CD4-positive, alpha-beta T cell (primary cell): ENCODE measurements at regions of chr17 and their contacts with region 1.

Region 1: GRCh38 chr17:3845621-3846441 is at the start of gene NCBP3:
- DNase-seq: peak; percentile 79 to 97 (median 90)
- ATAC-seq: peak; percentile 90
- H3K4me3 ChIP-seq: peak within 1 kb of the TSS; percentile 100
- H3K4me3 Mint-ChIP-seq: peak within 1 kb of the TSS; percentile 95
- H3K27ac ChIP-seq: peak within 1 kb of the TSS; percentile 70 to 77
- H3K27ac Mint-ChIP-seq: peak within 1 kb of the TSS; percentile 82
- H3K4me1 ChIP-seq: peaks cover 30% of the 10 kb centered on the region
- H3K4me1 Mint-ChIP-seq: peaks cover 28% of the 10 kb centered on the region
- H3K27me3 ChIP-seq: no peaks in the 10 kb centered on the region
- H3K27me3 Mint-ChIP-seq: no peaks in the 10 kb centered on the region
- CTCF ChIP-seq: peak; percentile 82
- total RNA-seq, gene NCBP3: 25.0 to 29.5 TPM

Region 2: GRCh38 chr17:3668279-3669085 is 177.3 kb before region 1 on chr17 and contains the starts of genes EMC6 and TAX1BP3:
- CTCF ChIA-PET with region 1: no interaction called
- POLR2A ChIA-PET with region 1: interaction called, 4 read pairs
- intact Hi-C with region 1: loop called in 1 of 2 experiments (anchors 5 kb)
- DNase-seq: peak; percentile 96 to 99 (median 99)
- ATAC-seq: peak; percentile 94
- H3K4me3 ChIP-seq: peak within 1 kb of the TSS; percentile 100
- H3K4me3 Mint-ChIP-seq: peak within 1 kb of the TSS; percentile 92
- H3K27ac ChIP-seq: peak within 1 kb of the TSS; percentile 67 to 78
- H3K27ac Mint-ChIP-seq: peak within 1 kb of the TSS; percentile 81
- H3K4me1 ChIP-seq: peaks cover 25% of the 10 kb centered on the region
- H3K4me1 Mint-ChIP-seq: peaks cover 13% of the 10 kb centered on the region
- H3K27me3 ChIP-seq: no peaks in the 10 kb centered on the region
- H3K27me3 Mint-ChIP-seq: no peaks in the 10 kb centered on the region
- CTCF ChIP-seq: no peak
- total RNA-seq, gene EMC6: 28.8 to 29.6 TPM
- total RNA-seq, gene TAX1BP3: 6.0 to 6.6 TPM

Region 3: DNA sequence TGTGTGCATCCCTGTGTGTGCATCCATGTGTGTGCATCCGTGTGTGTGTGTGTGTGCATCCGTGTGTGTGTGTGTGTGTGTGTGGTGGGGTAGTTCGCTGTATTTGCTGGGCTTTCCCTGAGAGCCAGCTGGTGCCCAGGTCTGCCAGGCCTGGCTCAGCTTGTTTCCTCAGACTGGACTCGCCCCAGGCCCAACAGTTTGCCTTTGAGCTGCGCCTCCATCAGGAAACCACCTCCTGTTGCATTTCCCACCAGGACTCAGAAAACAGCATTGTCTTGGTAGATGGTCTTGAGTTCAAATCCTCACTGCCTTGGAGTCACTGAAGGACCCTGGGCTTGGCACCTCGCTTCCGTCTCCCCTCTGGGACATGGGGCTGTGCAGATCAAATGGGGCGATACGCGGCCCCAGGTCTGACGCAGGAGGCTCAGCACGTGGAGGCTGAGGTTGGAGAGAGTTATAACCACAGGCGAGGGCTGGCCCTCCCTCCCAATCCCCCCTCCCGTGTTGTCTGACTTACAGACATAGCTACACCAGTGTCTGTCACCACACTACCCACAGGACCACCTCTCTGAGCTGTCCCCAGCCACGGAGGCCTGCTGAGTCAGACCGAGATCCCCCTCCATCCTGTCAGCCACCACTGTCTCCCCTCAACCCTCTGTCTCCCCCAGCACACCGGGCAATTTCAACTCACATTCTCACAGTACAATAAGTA is 49.6 kb before region 1 on chr17:
- CTCF ChIA-PET with region 1: no interaction called
- POLR2A ChIA-PET with region 1: no interaction called
- intact Hi-C with region 1: no loop called
- DNase-seq: peak; percentile 31 to 91 (median 58)
- ATAC-seq: peak; percentile 75
- H3K4me3 ChIP-seq: no peak overlapping the region
- H3K4me3 Mint-ChIP-seq: peak overlapping the region; percentile 11
- H3K27ac ChIP-seq: no peak overlapping the region
- H3K27ac Mint-ChIP-seq: peak overlapping the region; percentile 59
- H3K4me1 ChIP-seq: peaks cover 36% of the 10 kb centered on the region
- H3K4me1 Mint-ChIP-seq: peaks cover 20% of the 10 kb centered on the region
- H3K27me3 ChIP-seq: no peaks in the 10 kb centered on the region
- H3K27me3 Mint-ChIP-seq: no peaks in the 10 kb centered on the region
- CTCF ChIP-seq: no peak

Region 4: GRCh38 chr17:3827124-3827773 is 18.6 kb before region 1 on chr17:
- CTCF ChIA-PET with region 1: interaction called, 22 read pairs
- POLR2A ChIA-PET with region 1: interaction called, 3 read pairs
- intact Hi-C with region 1: no loop called
- DNase-seq: peak; percentile 44 to 85 (median 66)
- ATAC-seq: peak; percentile 67
- H3K4me3 ChIP-seq: no peak overlapping the region
- H3K4me3 Mint-ChIP-seq: no peak overlapping the region
- H3K27ac ChIP-seq: no peak overlapping the region
- H3K27ac Mint-ChIP-seq: no peak overlapping the region
- H3K4me1 ChIP-seq: no peaks in the 10 kb centered on the region
- H3K4me1 Mint-ChIP-seq: peaks cover 6% of the 10 kb centered on the region
- H3K27me3 ChIP-seq: no peaks in the 10 kb centered on the region
- H3K27me3 Mint-ChIP-seq: no peaks in the 10 kb centered on the region
- CTCF ChIP-seq: peak; percentile 84

Region 5: DNA sequence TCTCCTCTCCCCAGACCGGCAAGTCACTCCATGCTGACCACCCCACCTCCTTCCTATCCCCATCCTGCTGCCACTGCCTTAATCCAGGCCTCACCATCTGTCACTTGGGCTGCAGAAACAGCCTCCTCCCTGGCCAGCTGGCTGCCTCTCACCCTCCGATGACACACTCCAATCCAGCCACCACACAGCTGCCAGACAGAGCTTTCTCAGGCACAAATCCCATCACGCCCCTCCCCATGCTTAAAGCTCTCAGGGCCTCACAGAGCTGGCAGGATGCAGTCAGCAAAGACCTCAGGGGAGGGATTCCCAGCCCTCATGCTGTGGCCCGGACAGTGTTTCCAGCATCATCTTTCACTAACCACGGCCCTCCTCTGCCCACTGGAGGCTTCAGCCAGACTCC is 33.4 kb after region 1 on chr17:
- CTCF ChIA-PET with region 1: no interaction called
- POLR2A ChIA-PET with region 1: no interaction called
- intact Hi-C with region 1: no loop called
- DNase-seq: no peak
- ATAC-seq: no peak
- H3K4me3 ChIP-seq: no peak overlapping the region
- H3K4me3 Mint-ChIP-seq: no peak overlapping the region
- H3K27ac ChIP-seq: no peak overlapping the region
- H3K27ac Mint-ChIP-seq: no peak overlapping the region
- H3K4me1 ChIP-seq: no peaks in the 10 kb centered on the region
- H3K4me1 Mint-ChIP-seq: no peaks in the 10 kb centered on the region
- H3K27me3 ChIP-seq: no peaks in the 10 kb centered on the region
- H3K27me3 Mint-ChIP-seq: no peaks in the 10 kb centered on the region
- CTCF ChIP-seq: no peak

Region 6: GRCh38 chr17:3965118-3965803 is 119.4 kb after region 1 on chr17:
- CTCF ChIA-PET with region 1: interaction called, 9 read pairs
- POLR2A ChIA-PET with region 1: interaction called, 14 read pairs
- intact Hi-C with region 1: loop called in 1 of 2 experiments (anchors 5 kb)
- DNase-seq: peak; percentile 44 to 81 (median 58)
- ATAC-seq: peak; percentile 58
- H3K4me3 ChIP-seq: peak overlapping the region; percentile 65
- H3K4me3 Mint-ChIP-seq: peak overlapping the region; percentile 92
- H3K27ac ChIP-seq: peak overlapping the region; percentile 57 to 84
- H3K27ac Mint-ChIP-seq: peak overlapping the region; percentile 92
- H3K4me1 ChIP-seq: peaks cover 52% of the 10 kb centered on the region
- H3K4me1 Mint-ChIP-seq: peaks cover 51% of the 10 kb centered on the region
- H3K27me3 ChIP-seq: no peaks in the 10 kb centered on the region
- H3K27me3 Mint-ChIP-seq: no peaks in the 10 kb centered on the region
- CTCF ChIP-seq: no peak

Region 7: DNA sequence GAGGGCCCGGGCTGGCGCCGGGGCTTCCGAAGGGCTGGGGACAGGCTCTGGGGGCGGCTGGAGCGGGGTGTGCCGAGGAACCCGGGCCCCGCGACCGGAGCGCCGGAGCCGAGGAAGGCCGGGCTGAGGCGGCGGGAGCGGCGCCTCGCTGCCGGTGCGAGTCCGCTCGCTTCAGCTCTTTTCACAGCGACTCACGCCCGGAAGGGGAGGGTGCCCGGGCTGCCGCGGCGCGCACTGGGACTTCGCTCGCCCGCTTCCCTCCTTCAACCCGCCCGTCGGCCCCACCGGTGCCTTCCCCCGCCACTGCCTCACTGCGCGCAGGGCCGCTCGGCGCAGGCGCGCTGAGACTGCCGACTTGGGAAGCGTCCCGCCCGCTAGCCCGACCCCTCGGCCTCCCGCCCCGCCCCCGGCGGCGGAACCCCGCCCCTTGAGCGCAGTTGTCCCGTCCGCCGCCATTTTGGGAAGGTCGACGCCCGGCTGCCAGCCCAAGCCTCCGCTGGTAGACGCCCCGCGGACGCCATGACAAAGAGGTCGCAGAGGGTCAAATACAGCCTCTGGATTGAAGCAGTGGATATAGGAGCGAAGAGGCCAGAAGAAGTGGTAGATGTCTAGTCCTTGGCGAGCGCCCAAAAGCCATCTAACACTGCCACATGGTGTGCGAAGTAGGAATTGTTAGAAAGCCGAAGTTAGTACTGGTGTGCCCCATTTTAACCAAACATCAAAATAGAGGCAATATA is 520.7 kb after region 1 on chr17 and contains the start of gene UBE2G1:
- CTCF ChIA-PET with region 1: no interaction called
- POLR2A ChIA-PET with region 1: no interaction called
- intact Hi-C with region 1: loop called in 1 of 2 experiments (anchors 10 kb)
- DNase-seq: peak; percentile 97 to 100 (median 99)
- ATAC-seq: peak; percentile 82
- H3K4me3 ChIP-seq: peak within 1 kb of the TSS; percentile 54
- H3K4me3 Mint-ChIP-seq: peak within 1 kb of the TSS; percentile 90
- H3K27ac ChIP-seq: peak within 1 kb of the TSS; percentile 68 to 91
- H3K27ac Mint-ChIP-seq: peak within 1 kb of the TSS; percentile 89
- H3K4me1 ChIP-seq: peaks cover 41% of the 10 kb centered on the region
- H3K4me1 Mint-ChIP-seq: peaks cover 31% of the 10 kb centered on the region
- H3K27me3 ChIP-seq: no peaks in the 10 kb centered on the region
- H3K27me3 Mint-ChIP-seq: no peaks in the 10 kb centered on the region
- CTCF ChIP-seq: no peak
- total RNA-seq, gene UBE2G1: 58.5 to 58.8 TPM